H1 (cell line): ENCODE measurements at regions of chr20 and their contacts with region 1.

Region 1: GRCh38 chr20:31990641-31991338 is 19.4 kb upstream of the CCM2L start:
- DNase-seq: no peak
- H3K4me3 ChIP-seq: no peak overlapping the region
- H3K27ac ChIP-seq: no peak overlapping the region
- H3K4me1 ChIP-seq: peaks cover 0 to 13% (median 8%) of the 10 kb centered on the region in 4 experiments; a peak in 4 of 7 replicates
- H3K27me3 ChIP-seq: peaks cover 2 to 34% (median 27%) of the 10 kb centered on the region in 4 experiments
- CTCF ChIP-seq: no peak
- EP300 ChIP-seq: no peak
- POLR2A ChIP-seq: no peak
- RAD21 ChIP-seq: no peak

Region 2: GRCh38 chr20:31968291-31969126 is 22.3 kb before region 1 on chr20:
- CTCF ChIA-PET with region 1: interaction called, 13 read pairs
- POLR2A ChIA-PET with region 1: interaction called, 4 read pairs
- DNase-seq: peak; percentile 77 to 99
- H3K4me3 ChIP-seq: peak overlapping the region; percentile 43 to 70 (median 64)
- H3K27ac ChIP-seq: no peak overlapping the region
- H3K4me1 ChIP-seq: peaks cover 0 to 12% (median 7%) of the 10 kb centered on the region in 4 experiments; a peak in 5 of 7 replicates
- H3K27me3 ChIP-seq: peaks cover 0 to 8% (median 2%) of the 10 kb centered on the region in 4 experiments; a peak in 5 of 7 replicates
- CTCF ChIP-seq: peak in 1 of 3 experiments; percentile 23; a peak in 1 of 4 replicates
- EP300 ChIP-seq: peak in 1 of 2 experiments; percentile 69; a peak in 1 of 3 replicates
- POLR2A ChIP-seq: 0 out of 3 replicates have a peak, but pooled peaks of 1 of the 2 experiments have one; percentile 49
- RAD21 ChIP-seq: peak; percentile 29 to 48; a peak in 3 of 4 replicates

Region 3: DNA sequence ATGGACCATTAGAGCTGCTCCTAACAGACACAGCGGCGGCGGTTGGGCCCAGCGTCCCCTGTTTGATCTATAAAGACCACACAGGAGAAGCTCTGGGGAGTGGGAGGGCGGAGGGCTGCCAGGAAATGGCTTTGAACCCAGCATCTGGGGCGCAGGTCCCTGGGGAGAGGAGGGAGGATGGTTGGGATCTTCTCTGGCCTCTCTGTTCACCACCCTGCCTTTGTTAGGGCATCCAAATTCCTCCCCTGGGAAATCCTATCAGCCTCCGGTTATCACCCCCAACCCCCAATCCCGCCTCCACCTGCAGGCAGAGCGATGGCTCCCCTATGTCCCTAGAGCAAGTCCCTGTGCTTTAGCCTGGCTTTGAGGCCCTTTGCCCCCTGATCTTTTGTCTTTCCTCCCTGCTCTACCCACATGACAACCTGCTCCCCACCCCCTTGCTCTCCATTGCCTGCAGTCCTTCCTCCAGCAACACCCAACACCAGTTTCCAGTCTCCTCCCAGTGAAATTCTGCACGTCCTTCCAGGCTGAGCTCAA is 15.8 kb before region 1 on chr20:
- CTCF ChIA-PET with region 1: interaction called, 20 read pairs
- POLR2A ChIA-PET with region 1: interaction called, 8 read pairs
- DNase-seq: peak in 1 of 2 experiments; percentile 69
- H3K4me3 ChIP-seq: peak overlapping the region in 3 of 4 experiments; percentile 8 to 41 (median 10); a peak in 6 of 8 replicates
- H3K27ac ChIP-seq: peak overlapping the region; percentile 51; the same call in 1 of the 2 replicates
- H3K4me1 ChIP-seq: peaks cover 5 to 14% (median 10%) of the 10 kb centered on the region in 4 experiments
- H3K27me3 ChIP-seq: no peaks in the 10 kb centered on the region
- CTCF ChIP-seq: no peak
- EP300 ChIP-seq: no peak
- POLR2A ChIP-seq: peak in 1 of 2 experiments; percentile 78; a peak in 2 of 3 replicates
- RAD21 ChIP-seq: peak; percentile 4 to 17; a peak in 2 of 4 replicates

Region 4: GRCh38 chr20:32018269-32019074 is 27.7 kb after region 1 on chr20:
- CTCF ChIA-PET with region 1: interaction called, 16 read pairs
- POLR2A ChIA-PET with region 1: interaction called, 3 read pairs
- DNase-seq: peak; percentile 57 to 99
- H3K4me3 ChIP-seq: peak overlapping the region; percentile 67 to 89 (median 76)
- H3K27ac ChIP-seq: peak overlapping the region; percentile 73; the same call in 1 of the 2 replicates
- H3K4me1 ChIP-seq: peaks cover 0 to 10% (median 7%) of the 10 kb centered on the region in 4 experiments; a peak in 5 of 7 replicates
- H3K27me3 ChIP-seq: peaks cover 0 to 8% (median under 1%) of the 10 kb centered on the region in 4 experiments; a peak in 4 of 7 replicates
- CTCF ChIP-seq: peak; percentile 2 to 39 (median 23)
- EP300 ChIP-seq: no peak
- POLR2A ChIP-seq: peak; percentile 83 to 84; a peak in 2 of 3 replicates
- RAD21 ChIP-seq: no peak